GM23248 (cell line): ENCODE measurements at regions of chr15 and their contacts with region 1.

Region 1: GRCh38 chr15:94105760-94106159 is 125.6 kb upstream of the MCTP2 start:
- DNase-seq: peak; percentile 24
- H3K4me3 ChIP-seq: no peak overlapping the region
- H3K27ac ChIP-seq: no peak overlapping the region
- H3K4me1 ChIP-seq: 0 out of 2 replicates have a peak, but pooled peaks cover 5% of the 10 kb centered on the region
- H3K27me3 ChIP-seq: 0 out of 2 replicates have a peak, but pooled peaks cover 5% of the 10 kb centered on the region

Region 2: DNA sequence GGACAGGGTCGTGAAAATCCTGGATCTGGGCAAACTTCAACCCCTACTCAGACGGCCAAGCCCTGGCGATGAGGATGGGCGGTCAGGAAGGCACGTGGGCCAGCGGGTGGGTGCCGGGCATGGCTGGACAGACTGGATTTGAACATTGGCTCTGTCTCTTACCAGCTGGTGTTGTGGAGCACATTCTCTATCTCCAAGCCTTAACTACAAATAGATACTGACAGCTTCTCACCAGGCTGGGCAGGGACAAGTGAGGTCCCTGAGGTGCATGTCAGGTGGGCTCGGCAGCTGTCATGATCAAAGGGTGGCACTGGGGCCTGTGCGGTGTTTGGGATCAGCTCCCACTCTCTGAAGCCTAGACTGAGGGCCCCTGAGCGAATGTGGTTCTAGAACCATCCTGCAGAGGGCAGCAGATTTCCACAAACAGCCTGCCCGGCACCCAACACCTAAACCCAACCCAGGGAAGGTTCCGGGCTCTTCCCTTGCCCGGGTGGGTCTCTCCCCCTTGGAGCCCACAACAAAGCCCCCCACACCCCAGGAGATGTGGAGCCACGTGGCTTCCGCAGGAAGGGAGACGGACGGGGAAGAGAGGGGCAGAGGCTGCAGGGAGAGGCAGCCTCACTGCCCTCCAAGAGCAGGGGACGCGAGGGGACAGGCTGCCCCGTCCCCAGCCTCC is 1075.2 kb before region 1 on chr15:
- in situ Hi-C with region 1: loop called (anchors 10 kb)
- DNase-seq: peak; percentile 79
- H3K4me3 ChIP-seq: no peak overlapping the region
- H3K27ac ChIP-seq: no peak overlapping the region
- H3K4me1 ChIP-seq: peaks cover 27% of the 10 kb centered on the region
- H3K27me3 ChIP-seq: no peaks in the 10 kb centered on the region

Region 3: DNA sequence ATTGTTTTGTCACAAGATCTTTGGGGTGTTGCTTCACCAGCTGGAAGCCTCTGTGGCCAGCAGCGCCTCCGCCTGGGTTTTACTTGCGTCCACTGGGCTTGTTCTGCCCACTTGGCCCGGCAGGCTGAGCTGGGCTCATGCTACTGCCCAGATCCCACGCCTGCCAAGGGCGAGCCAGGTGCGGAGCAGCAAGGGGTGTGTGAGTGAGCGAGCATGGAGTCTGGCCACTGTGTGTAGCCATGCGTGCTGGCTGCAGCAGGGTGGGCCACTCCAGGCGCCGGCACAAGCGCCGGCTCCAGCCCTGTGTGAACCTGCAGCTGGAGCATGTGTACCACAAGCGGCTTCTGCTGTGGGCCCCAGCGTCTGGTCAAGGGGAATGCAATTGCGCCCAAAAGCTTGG is 600.3 kb before region 1 on chr15:
- in situ Hi-C with region 1: no loop called
- DNase-seq: no peak
- H3K4me3 ChIP-seq: no peak overlapping the region
- H3K27ac ChIP-seq: no peak overlapping the region
- H3K4me1 ChIP-seq: no peaks in the 10 kb centered on the region
- H3K27me3 ChIP-seq: no peaks in the 10 kb centered on the region